Activated CD4-positive, alpha-beta memory T cell treated with anti-CD3 and anti-CD28 coated beads for 36 hours (primary cell): ENCODE measurements at regions of chr6 and their contacts with region 1.

Region 1: DNA sequence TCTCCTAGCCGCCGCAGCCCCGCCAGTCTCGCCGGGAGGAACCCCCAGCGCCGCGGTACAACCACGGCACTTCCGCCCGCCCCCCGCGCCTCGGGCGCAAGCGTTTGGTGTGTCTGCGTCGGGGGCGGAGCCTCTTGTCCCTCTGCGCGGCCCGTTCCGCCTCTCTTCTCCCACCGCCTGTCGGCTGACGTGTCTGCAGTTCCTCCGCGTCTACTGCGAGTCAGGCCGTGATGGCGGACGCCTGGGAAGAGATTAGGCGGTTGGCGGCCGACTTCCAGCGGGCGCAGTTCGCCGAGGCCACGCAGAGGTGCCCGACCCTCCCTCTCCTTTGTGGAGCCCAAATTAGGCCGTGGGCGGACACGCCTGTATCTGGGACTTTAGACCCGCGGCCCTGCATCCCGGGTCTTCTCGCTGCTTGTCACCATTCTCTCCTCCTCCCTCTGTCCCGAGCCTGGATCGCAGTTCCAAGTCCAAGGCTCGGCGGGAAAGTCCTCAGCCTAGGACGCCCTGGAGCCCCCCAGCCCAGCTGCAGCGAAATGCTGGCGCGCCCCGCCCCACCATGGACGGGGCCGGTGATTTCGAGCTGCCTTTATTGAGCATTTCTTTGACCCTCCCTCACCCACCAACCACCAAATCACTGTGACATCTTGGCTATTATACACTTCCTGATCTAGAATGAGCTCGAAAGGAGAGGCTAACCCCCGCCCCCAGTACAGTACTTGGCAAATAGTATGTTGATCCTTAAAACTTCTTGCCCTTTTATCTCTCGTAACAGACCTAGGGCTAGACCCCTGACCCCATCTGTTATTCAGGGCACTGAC is at the start of gene UFL1:
- DNase-seq: peak; percentile 94
- H3K4me3 Mint-ChIP-seq: peak within 1 kb of the TSS; percentile 98
- H3K27ac Mint-ChIP-seq: peak within 1 kb of the TSS; percentile 99
- H3K4me1 Mint-ChIP-seq: peaks cover 16% of the 10 kb centered on the region
- H3K27me3 Mint-ChIP-seq: no peaks in the 10 kb centered on the region
- total RNA-seq, gene UFL1: 28.8 to 29.7 TPM

Region 2: GRCh38 chr6:95431637-95432228 is 1090.1 kb before region 1 on chr6:
- CTCF ChIA-PET with region 1: no interaction called
- POLR2A ChIA-PET with region 1: no interaction called
- intact Hi-C with region 1: loop called (anchors 5 kb)
- DNase-seq: peak; percentile 31
- H3K4me3 Mint-ChIP-seq: no peak overlapping the region
- H3K27ac Mint-ChIP-seq: no peak overlapping the region
- H3K4me1 Mint-ChIP-seq: no peaks in the 10 kb centered on the region
- H3K27me3 Mint-ChIP-seq: no peaks in the 10 kb centered on the region

Region 3: DNA sequence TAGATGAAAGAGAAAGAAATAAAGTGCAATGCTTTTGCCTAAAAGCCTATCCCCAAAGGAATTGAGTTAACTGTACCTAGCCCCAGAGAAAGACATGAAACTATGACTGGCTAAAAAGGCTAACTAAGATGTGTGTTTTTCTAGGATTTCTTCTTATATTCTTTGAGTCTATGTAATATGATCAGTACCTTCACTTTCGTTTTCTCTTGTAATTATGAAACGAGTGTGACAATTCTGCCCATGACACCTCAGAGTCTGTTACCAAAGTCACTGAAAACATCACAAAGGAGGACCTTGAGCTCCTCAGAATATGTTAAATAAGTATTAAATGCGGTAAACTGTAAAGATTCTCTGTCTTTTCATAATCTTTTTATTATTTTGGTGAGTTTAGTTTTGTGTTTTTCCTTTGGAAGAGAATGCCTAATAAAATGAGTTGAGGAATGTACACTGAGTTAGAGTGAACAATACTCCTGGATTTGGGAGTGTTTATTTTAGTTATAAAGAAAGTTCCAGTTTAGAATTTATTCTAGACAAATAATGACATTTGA is 364.8 kb before region 1 on chr6:
- CTCF ChIA-PET with region 1: no interaction called
- POLR2A ChIA-PET with region 1: no interaction called
- intact Hi-C with region 1: loop called (anchors 5 kb)
- DNase-seq: no peak
- H3K4me3 Mint-ChIP-seq: no peak overlapping the region
- H3K27ac Mint-ChIP-seq: no peak overlapping the region
- H3K4me1 Mint-ChIP-seq: peaks cover 7% of the 10 kb centered on the region
- H3K27me3 Mint-ChIP-seq: no peaks in the 10 kb centered on the region

Region 4: GRCh38 chr6:96837081-96837971 is 315.5 kb after region 1 on chr6 and contains the start of gene GPR63:
- CTCF ChIA-PET with region 1: no interaction called
- POLR2A ChIA-PET with region 1: interaction called, 3 read pairs
- intact Hi-C with region 1: loop called (anchors 2 kb)
- DNase-seq: peak; percentile 87
- H3K4me3 Mint-ChIP-seq: peak within 1 kb of the TSS; percentile 95
- H3K27ac Mint-ChIP-seq: peak within 1 kb of the TSS; percentile 50
- H3K4me1 Mint-ChIP-seq: peaks cover 17% of the 10 kb centered on the region
- H3K27me3 Mint-ChIP-seq: peaks cover 16% of the 10 kb centered on the region
- total RNA-seq, gene GPR63: 1.5 to 1.7 TPM

Region 5: DNA sequence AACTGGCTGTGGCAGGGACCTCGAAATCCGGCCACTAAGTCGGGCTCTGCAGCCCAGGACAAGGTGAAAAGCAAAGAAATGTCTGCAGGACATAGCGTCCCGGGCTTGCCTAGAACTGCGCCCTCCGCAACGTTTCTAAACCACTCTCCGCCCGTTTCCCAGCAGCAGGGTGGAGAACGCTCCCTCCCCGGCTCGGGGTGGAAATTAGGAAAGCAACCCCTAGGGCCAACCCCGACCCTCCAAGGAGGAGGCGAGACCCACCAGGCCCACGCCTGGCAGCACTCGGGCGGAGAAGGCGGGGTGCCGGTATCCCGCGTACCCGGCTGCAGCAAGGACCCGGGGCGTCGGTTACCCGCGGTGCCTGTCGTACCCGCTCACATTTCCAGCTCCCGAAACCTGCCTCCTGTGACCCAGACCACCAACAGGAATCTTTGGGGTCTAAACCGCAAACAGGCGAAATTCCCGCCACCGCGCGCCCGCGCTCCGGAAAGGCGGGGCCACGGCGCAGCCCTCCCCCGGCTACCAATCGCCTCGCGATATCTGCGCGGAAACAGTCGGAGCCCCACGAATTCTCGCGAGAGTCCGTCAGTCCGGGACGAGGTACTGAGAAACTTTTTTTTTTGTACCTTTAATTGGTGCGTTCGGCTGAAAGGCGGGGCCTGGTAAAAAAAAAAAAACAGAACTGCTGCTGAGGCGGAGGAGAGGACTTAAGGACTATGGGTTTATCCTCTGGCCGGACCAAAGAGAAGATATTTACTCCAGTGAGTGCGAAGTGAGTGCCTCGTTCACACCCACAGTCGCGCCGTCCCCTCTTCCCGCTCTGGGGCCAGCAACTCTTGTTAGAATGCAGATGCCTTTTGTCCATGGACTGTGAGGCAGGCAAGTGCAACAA is 761.1 kb after region 1 on chr6 and contains the start of gene MMS22L:
- CTCF ChIA-PET with region 1: no interaction called
- POLR2A ChIA-PET with region 1: no interaction called
- intact Hi-C with region 1: loop called (anchors 2 kb)
- DNase-seq: peak; percentile 95
- H3K4me3 Mint-ChIP-seq: peak within 1 kb of the TSS; percentile 91
- H3K27ac Mint-ChIP-seq: peak within 1 kb of the TSS; percentile 69
- H3K4me1 Mint-ChIP-seq: peaks cover 24% of the 10 kb centered on the region
- H3K27me3 Mint-ChIP-seq: no peaks in the 10 kb centered on the region
- total RNA-seq, gene MMS22L: 38.5 to 43.3 TPM